H1 (cell line): ENCODE measurements at regions of chr1 and their contacts with region 1.

Region 1: GRCh38 chr1:88922214-88922613 is 30.8 kb upstream of the GTF2B start:
- DNase-seq: no peak
- H3K4me3 ChIP-seq: no peak overlapping the region
- H3K27ac ChIP-seq: no peak overlapping the region
- H3K4me1 ChIP-seq: no peaks in the 10 kb centered on the region
- H3K27me3 ChIP-seq: no peaks in the 10 kb centered on the region
- CTCF ChIP-seq: peak; percentile 10 to 42 (median 28)
- EP300 ChIP-seq: no peak
- POLR2A ChIP-seq: no peak
- RAD21 ChIP-seq: peak; percentile 49 to 63

Region 2: GRCh38 chr1:88813471-88813870 is 108.7 kb before region 1 on chr1:
- CTCF ChIA-PET with region 1: no interaction called
- POLR2A ChIA-PET with region 1: no interaction called
- DNase-seq: no peak
- H3K4me3 ChIP-seq: no peak overlapping the region
- H3K27ac ChIP-seq: no peak overlapping the region
- H3K4me1 ChIP-seq: no peaks in the 10 kb centered on the region
- H3K27me3 ChIP-seq: no peaks in the 10 kb centered on the region
- CTCF ChIP-seq: no peak
- EP300 ChIP-seq: no peak
- POLR2A ChIP-seq: no peak
- RAD21 ChIP-seq: no peak

Region 3: GRCh38 chr1:88877382-88877825 is 44.8 kb before region 1 on chr1:
- CTCF ChIA-PET with region 1: no interaction called
- POLR2A ChIA-PET with region 1: no interaction called
- DNase-seq: no peak
- H3K4me3 ChIP-seq: no peak overlapping the region
- H3K27ac ChIP-seq: no peak overlapping the region
- H3K4me1 ChIP-seq: no peaks in the 10 kb centered on the region
- H3K27me3 ChIP-seq: no peaks in the 10 kb centered on the region
- CTCF ChIP-seq: peak in 2 of 3 experiments; percentile 30 to 31; a peak in 2 of 4 replicates
- EP300 ChIP-seq: no peak
- POLR2A ChIP-seq: no peak
- RAD21 ChIP-seq: peak in 1 of 2 experiments; percentile 46

Region 4: DNA sequence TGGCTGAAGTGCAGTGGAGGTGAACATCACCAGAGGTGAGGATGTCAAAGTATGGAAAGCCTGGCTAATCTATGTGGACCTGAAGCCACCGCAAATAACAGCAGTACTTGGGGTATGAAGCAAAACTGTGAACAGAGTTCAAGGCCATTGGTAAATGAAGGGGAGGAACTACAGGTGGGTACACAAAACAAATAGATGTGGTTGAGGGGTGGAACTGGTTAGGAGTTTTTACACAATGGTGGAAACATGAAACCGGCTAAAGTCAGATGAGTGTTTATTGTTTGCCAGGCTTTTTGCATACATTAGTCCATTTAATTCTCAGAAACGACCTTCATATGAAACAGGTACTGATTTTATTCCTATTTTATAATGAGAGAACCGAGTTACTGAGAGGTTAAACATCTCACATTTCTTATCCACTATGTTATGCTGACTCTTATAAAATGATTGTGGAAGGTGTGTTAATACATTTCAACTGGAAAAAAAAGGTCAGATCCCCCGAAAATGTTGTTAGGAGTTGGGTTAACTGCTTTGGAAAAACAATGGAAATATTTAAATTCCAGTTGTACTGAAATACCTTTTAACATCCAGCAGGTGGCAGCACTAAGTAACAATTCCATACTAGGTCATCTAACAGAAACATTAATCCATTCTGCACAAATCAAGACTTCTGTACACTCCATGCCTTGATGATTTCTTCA is 13.5 kb after region 1 on chr1:
- CTCF ChIA-PET with region 1: interaction called, 19 read pairs
- POLR2A ChIA-PET with region 1: interaction called, 3 read pairs
- DNase-seq: no peak
- H3K4me3 ChIP-seq: no peak overlapping the region
- H3K27ac ChIP-seq: no peak overlapping the region
- H3K4me1 ChIP-seq: no peaks in the 10 kb centered on the region
- H3K27me3 ChIP-seq: no peaks in the 10 kb centered on the region
- CTCF ChIP-seq: peak in 2 of 3 experiments; percentile 24 to 68; a peak in 2 of 4 replicates
- EP300 ChIP-seq: no peak
- POLR2A ChIP-seq: no peak
- RAD21 ChIP-seq: peak; percentile 38 to 42; a peak in 3 of 4 replicates